ENCODE measurements at regions of chr12 and their contacts with region 1.

Region 1: GRCh38 chr12:104462931-104463339 is 6.2 kb downstream of the CHST11 start:
- DNase-seq: no peak
- H3K4me3 ChIP-seq: no peak overlapping the region
- H3K27ac ChIP-seq: peak overlapping the region; percentile 9
- H3K4me1 ChIP-seq: peaks cover 18% of the 10 kb centered on the region
- H3K27me3 ChIP-seq: no peaks in the 10 kb centered on the region
- CTCF ChIP-seq: no peak
- POLR2A ChIP-seq: no peak

Region 2: GRCh38 chr12:104604070-104604994 is 141.4 kb after region 1 on chr12:
- intact Hi-C with region 1: loop called (anchors 10 kb)
- DNase-seq: peak in 1 of 2 donors; percentile 95
- H3K4me3 ChIP-seq: no peak overlapping the region
- H3K27ac ChIP-seq: peak overlapping the region; percentile 78
- H3K4me1 ChIP-seq: peaks cover 46% of the 10 kb centered on the region
- H3K27me3 ChIP-seq: no peaks in the 10 kb centered on the region
- CTCF ChIP-seq: no peak
- POLR2A ChIP-seq: no peak

Measured in vagina (tissue), 2 donors.